Panc1 (cell line): ENCODE measurements at regions of chr17 and their contacts with region 1.

Region 1: DNA sequence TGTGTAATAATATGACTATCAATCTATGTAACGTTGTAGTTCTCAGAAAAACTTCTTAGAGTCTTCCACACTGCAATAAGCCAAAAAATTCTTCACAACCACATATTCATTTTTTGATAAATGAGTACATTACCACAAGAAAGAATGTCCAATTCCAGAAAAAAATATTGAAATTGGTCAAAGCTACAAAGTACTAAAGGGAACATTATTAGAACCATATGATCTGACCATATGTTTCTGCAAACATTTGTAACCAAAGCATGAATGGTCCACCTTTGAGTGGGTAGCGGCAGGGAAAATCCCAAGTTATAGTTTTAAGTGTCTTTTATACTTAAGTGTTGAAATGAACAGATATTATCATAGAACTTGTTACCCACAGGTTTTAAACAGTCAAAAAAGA is 71.7 kb upstream of the NACA2 start:
- DNase-seq: no peak
- ATAC-seq: no peak
- H3K4me3 ChIP-seq: no peak overlapping the region
- H3K27ac ChIP-seq: no peak overlapping the region
- H3K4me1 ChIP-seq: no peaks in the 10 kb centered on the region
- H3K27me3 ChIP-seq: peaks cover 9% of the 10 kb centered on the region; the same call in 1 of the 2 replicates
- CTCF ChIP-seq: no peak

Region 2: DNA sequence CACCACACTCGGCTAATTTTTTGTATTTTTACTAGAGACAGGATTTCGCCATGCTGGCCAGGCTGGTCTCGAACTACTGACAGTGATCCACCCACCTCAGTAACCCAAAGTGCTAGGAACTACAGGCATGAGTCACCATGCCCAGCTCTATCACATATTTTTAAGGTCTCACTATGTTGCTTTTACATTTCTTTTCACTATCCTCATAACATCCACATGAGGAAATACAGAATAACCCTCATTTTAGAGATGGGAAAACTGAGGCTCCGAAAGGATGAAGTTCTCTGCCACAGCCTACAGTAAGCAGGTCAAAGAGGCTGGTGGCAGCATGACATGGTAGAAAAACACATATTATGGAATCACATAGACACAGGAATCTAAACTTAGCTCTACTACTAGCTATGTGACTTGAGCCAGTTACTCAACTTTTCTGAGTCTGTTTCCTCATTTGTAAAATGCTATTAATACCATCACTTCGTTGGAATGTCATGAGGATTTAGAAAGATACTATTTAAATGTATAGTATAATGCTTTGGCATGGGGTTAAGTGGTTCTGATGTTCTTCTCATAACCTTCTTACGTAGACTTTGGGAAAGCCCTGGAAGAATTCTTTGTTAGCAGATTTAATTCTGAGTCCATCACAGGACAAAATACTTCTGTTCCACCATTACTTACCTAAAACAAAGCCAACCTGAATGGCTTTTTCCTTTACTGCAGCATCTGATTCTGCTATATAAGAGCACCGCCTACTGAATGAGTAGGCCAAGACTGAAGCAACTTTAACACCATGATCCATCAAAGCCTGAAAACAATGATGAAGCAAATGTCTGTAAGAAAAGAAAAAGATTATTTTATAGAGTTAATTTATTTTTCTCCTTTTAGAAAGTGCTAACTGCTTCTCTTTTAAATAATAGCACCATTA is 1168.7 kb before region 1 on chr17:
- CTCF ChIA-PET with region 1: no interaction called
- POLR2A ChIA-PET with region 1: interaction called, 13 read pairs
- in situ Hi-C with region 1: no loop called
- intact Hi-C with region 1: no loop called
- DNase-seq: no peak
- ATAC-seq: no peak
- H3K4me3 ChIP-seq: no peak overlapping the region
- H3K27ac ChIP-seq: no peak overlapping the region
- H3K4me1 ChIP-seq: no peaks in the 10 kb centered on the region
- H3K27me3 ChIP-seq: no peaks in the 10 kb centered on the region
- CTCF ChIP-seq: no peak

Region 3: GRCh38 chr17:61635913-61636432 is 26.8 kb before region 1 on chr17:
- CTCF ChIA-PET with region 1: no interaction called
- POLR2A ChIA-PET with region 1: no interaction called
- in situ Hi-C with region 1: no loop called
- intact Hi-C with region 1: no loop called
- DNase-seq: peak; percentile 47
- ATAC-seq: peak; percentile 85
- H3K4me3 ChIP-seq: no peak overlapping the region
- H3K27ac ChIP-seq: no peak overlapping the region
- H3K4me1 ChIP-seq: no peaks in the 10 kb centered on the region
- H3K27me3 ChIP-seq: no peaks in the 10 kb centered on the region
- CTCF ChIP-seq: peak; percentile 78

Region 4: GRCh38 chr17:61689610-61690180 is 27.0 kb after region 1 on chr17:
- CTCF ChIA-PET with region 1: no interaction called
- POLR2A ChIA-PET with region 1: no interaction called
- in situ Hi-C with region 1: no loop called
- intact Hi-C with region 1: no loop called
- DNase-seq: no peak
- ATAC-seq: no peak
- H3K4me3 ChIP-seq: no peak overlapping the region
- H3K27ac ChIP-seq: no peak overlapping the region
- H3K4me1 ChIP-seq: no peaks in the 10 kb centered on the region
- H3K27me3 ChIP-seq: no peaks in the 10 kb centered on the region
- CTCF ChIP-seq: no peak

Region 5: DNA sequence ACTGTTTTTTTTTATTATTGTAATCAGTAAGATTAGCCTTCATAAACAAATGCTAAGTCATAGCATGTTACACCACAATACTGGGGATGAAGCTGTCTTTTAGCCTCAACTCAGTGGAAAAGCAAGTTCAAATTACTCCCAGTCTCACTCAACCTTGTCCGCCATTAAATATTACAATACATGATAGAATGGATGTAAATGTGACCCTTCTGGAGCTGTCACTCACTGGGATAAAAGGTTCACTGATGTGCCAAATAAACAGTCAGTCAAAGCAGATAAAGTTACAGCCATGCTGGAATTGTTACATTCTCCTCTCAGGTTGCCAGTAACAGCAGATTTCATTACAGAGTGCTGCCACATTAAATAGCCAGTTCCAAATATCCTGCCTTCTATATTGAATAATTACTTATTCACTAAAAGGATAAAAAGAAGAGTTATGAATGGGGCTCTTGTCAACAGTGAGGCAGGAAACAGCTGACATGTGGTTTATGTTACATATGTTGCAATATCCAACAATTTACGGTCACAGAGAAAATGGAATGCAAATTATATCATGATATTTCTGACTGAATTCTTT is 147.2 kb after region 1 on chr17:
- CTCF ChIA-PET with region 1: no interaction called
- POLR2A ChIA-PET with region 1: no interaction called
- in situ Hi-C with region 1: no loop called
- intact Hi-C with region 1: no loop called
- DNase-seq: no peak
- ATAC-seq: no peak
- H3K4me3 ChIP-seq: no peak overlapping the region
- H3K27ac ChIP-seq: no peak overlapping the region
- H3K4me1 ChIP-seq: no peaks in the 10 kb centered on the region
- H3K27me3 ChIP-seq: no peaks in the 10 kb centered on the region
- CTCF ChIP-seq: no peak

Region 6: DNA sequence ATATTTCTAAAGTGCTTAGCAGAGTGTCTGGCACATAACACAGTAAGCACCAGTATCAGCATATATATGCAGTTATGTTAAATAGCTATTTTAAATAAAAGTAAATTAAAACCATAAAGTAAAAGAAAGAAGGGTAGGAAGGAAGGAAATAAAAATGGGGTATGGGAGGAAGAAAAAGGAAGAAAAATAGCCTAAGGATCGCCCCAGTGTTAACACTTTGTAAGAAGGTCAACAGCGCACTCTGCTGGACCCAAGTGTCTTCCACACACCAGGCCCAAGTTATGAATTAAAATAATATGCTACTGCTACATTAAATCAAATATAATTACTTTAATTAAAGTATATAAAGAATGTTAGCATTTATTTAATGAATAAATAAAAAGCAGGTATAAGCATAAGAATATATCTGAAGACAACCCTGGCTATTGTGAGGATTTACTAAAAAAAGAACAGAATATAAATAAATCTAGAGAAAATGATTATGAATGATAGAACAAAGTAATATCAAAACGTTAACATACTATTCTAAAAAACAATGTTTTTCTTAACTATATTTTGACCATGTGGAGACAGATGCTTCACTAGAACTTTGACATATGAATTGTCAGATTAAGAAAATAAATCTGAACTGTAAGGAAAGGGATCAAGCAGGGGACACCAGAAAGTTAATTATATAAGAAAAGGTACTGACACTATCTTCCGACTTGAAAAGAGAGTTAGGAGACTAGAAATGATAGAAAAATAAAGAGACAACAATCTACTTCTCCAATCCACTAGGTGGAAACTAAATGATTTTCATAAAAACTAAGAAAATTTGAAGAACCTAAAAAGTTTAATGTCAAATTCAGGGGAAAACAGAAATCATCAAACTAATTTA is 174.7 kb after region 1 on chr17:
- CTCF ChIA-PET with region 1: no interaction called
- POLR2A ChIA-PET with region 1: no interaction called
- in situ Hi-C with region 1: no loop called
- intact Hi-C with region 1: no loop called
- DNase-seq: peak; percentile 12
- ATAC-seq: peak; percentile 87; the same call in 1 of the 2 replicates
- H3K4me3 ChIP-seq: no peak overlapping the region
- H3K27ac ChIP-seq: no peak overlapping the region
- H3K4me1 ChIP-seq: peaks cover 12% of the 10 kb centered on the region; the same call in 1 of the 2 replicates
- H3K27me3 ChIP-seq: no peaks in the 10 kb centered on the region
- CTCF ChIP-seq: peak; percentile 82; the same call in 1 of the 2 replicates